ENCODE measurements at regions of chr10 and their contacts with region 1.

Region 1: DNA sequence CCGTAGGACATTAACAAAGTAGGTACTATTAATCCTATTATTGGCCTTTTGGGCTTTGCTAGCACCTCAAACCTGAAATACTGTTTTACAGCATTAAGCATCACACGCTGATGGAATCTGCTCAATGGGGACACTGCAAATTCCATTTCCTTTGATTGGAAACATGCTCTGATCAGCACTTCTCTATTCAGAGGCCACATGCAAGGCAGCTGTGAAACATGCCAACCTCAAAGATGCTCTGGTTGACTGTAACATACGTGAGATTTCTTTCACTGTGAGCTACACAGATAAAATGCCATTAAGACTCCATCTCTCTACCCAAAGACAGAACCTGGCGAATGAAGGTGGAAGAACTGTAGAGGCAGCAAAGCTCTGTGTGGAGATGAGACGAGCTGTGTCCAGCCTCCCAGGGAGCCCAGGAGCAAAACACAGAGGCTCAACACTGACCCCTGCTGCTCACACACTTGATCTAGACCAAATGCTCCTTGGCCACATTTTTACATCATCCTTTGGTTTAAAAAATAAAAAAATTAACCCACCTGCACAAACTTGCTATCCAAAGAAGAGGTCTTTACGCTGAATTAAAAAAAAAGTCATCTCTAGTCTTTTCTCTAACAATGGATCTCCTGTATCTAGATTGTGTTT is 8.0 kb downstream of the RSU1 start:
- DNase-seq: peak; percentile 71
- CTCF ChIP-seq: peak; percentile 62

Region 2: GRCh38 chr10:16639471-16639870 is 169.7 kb before region 1 on chr10:
- CTCF ChIA-PET with region 1: no interaction called
- POLR2A ChIA-PET with region 1: no interaction called
- DNase-seq: no peak
- CTCF ChIP-seq: no peak

Region 3: GRCh38 chr10:16792675-16793074 is 16.5 kb before region 1 on chr10:
- CTCF ChIA-PET with region 1: interaction called, 35 read pairs
- POLR2A ChIA-PET with region 1: no interaction called
- DNase-seq: no peak
- CTCF ChIP-seq: no peak

Region 4: GRCh38 chr10:16820421-16820820 is 11.2 kb after region 1 on chr10:
- CTCF ChIA-PET with region 1: interaction called, 12 read pairs
- POLR2A ChIA-PET with region 1: no interaction called
- DNase-seq: no peak
- CTCF ChIP-seq: no peak

Measured in GM10248 (cell line).